Right ventricle myocardium superior (tissue), 1 donor: ENCODE measurements at regions of chr12 and their contacts with region 1.

Region 1: DNA sequence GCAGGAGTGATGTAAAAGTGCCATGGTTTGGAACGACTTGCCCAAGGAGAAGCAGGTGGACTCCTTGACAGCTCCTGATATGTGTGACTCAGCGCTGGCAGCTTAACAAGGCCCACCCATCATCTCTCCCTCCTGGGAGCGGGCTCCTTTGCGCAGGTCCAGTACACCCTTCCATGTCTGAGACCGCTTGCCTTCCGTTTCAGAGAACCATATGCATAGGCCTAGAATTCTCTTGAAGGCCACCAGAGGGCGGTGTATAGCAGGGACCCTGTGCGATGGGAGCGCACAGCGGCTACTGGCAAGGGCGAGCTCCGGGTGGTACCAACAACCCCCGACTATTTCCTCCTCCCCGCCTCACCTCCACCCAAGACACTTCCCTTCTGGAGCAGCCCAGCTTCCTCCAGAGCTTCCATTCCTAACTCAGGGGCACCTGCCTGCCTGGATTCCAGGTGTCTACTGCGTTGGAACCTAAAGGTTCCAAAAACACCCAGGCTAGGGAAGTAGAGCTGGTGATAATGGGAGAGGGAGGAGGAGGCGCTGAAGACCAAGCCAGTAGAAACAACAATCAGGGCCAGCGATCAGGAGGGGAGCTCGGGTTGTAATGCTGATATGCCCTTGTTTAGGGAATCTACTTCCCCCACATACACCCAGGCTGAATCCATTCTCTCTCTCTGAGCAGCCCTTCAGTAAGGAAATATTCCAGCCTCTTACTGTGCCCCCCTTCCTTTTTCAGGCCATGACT is 6.2 kb downstream of the DHH start:
- DNase-seq: peak; percentile 66
- ATAC-seq: peak; percentile 95

Region 2: DNA sequence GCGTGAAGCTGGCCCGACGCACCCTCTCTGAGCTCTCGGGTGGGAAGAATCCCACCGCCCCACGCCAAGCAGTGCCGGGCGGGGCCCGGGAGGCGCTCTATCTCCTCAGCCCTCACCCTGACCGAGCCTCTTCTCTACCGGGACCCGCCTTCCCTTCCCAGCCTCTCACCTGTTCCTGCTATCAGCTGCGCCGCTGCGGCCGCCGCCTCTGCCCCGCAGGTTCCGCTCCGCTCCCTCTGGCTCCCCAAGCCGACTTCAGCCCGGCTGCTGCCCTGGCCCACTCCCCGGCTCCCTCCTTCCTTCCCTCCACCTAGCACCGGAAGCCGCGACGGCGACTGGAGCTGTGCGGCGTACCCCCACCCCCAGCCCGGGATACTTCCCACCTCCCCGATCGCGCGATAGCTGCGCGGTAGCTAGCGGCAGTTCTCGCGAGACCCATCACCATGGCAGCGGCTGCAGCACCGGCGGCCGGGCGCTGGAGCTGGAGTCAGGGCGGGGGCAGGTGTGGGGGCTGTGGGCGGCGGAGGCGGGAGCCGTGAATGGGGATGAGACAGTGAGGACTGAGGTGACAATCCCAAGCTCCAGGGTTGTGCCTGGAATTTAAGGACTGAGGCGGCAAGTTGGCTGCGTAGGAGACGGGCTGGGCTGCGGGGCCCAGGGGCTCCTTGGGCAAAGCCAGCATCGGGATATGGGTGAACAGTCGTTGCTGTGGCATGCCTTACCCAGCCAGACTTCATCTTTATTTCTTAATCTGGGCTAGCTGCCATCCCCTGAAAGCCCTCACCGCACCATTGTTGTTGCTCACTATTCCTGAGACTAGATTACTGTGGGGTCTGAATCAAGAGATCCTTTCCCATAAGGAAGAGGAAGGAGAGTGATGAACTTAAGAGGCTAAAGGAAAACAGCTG is 131.0 kb before region 1 on chr12 and contains the start of gene ARF3:
- intact Hi-C with region 1: no loop called
- DNase-seq: peak; percentile 96
- ATAC-seq: peak; percentile 98
- total RNA-seq, gene ARF3: 43.7 TPM

Region 3: DNA sequence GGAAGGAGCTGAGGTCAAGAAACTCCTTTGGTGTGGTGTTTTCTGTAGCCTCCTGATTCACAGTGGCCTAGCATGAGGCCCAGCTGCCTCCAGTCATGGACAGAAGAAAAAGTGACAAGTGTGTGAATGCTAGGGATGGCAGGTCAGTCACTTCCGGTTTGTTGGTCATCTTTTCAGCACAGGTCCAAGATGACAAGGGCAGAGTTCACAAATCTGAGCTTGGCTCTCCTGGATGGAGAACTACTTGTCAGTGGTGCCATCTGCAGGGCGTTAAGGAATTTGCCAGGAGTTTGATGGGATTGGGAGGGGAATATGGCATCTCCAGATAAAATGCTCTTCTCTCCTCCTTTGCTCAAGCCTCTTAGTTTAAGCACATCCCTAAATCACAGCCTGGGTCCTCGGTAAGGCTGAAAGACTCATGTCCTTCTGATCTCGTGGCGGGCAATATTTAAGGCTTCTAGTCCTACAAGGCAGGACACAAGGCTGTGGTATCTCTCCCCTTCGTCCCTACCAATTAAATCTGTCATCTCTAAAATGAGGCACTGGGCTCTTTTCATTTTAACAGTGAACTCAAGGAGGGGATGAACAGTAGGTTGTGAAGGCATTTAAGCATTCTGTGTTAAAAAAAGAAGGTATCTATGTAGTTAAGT is 32.8 kb after region 1 on chr12:
- intact Hi-C with region 1: loop called (anchors 5 kb)
- DNase-seq: no peak
- ATAC-seq: peak; percentile 89

Region 4: GRCh38 chr12:49154221-49154620 is 65.9 kb after region 1 on chr12:
- intact Hi-C with region 1: no loop called
- DNase-seq: no peak
- ATAC-seq: no peak